Activated naive CD4-positive, alpha-beta T cell treated with anti-CD3 and anti-CD28 coated beads for 36 hours (primary cell): ENCODE measurements at regions of chr4 and their contacts with region 1.

Region 1: GRCh38 chr4:82428969-82429727 is 1.1 kb downstream of the HNRNPDL start:
- DNase-seq: peak; percentile 92
- H3K4me3 Mint-ChIP-seq: peak overlapping the region; percentile 93
- H3K27ac Mint-ChIP-seq: peak overlapping the region; percentile 99
- H3K4me1 Mint-ChIP-seq: peaks cover 64% of the 10 kb centered on the region
- H3K27me3 Mint-ChIP-seq: no peaks in the 10 kb centered on the region

Region 2: GRCh38 chr4:80540785-80541469 is 1888.2 kb before region 1 on chr4:
- CTCF ChIA-PET with region 1: no interaction called
- intact Hi-C with region 1: loop called (anchors 5 kb)
- DNase-seq: no peak
- H3K4me3 Mint-ChIP-seq: no peak overlapping the region
- H3K27ac Mint-ChIP-seq: peak overlapping the region; percentile 41
- H3K4me1 Mint-ChIP-seq: peaks cover 48% of the 10 kb centered on the region
- H3K27me3 Mint-ChIP-seq: peaks cover 34% of the 10 kb centered on the region

Region 3: DNA sequence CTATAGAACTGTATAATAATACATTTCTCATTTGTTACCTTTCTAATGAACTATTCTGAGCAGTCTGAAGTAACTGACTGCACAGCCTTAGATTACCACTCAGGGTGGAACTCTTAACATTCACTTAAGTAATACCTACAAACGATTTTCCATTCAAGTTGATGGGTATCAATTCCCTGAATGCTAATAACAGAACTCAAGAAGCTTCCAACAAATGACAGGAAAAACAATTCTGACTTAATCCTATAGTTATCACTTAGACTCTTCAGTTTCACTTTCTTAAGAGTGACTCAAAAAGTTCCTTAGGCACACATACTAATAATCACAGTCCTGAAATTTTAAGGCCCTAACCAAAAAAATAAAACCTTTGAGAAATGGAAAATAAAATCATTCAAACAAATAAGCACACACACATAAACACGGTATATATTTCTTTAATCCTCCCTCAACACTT is 76.2 kb before region 1 on chr4:
- CTCF ChIA-PET with region 1: no interaction called
- intact Hi-C with region 1: loop called (anchors 2 kb)
- DNase-seq: no peak
- H3K4me3 Mint-ChIP-seq: no peak overlapping the region
- H3K27ac Mint-ChIP-seq: peak overlapping the region; percentile 78
- H3K4me1 Mint-ChIP-seq: peaks cover 55% of the 10 kb centered on the region
- H3K27me3 Mint-ChIP-seq: no peaks in the 10 kb centered on the region

Region 4: GRCh38 chr4:82360298-82361177 is 68.6 kb before region 1 on chr4:
- CTCF ChIA-PET with region 1: interaction called, 11 read pairs
- intact Hi-C with region 1: no loop called
- DNase-seq: no peak
- H3K4me3 Mint-ChIP-seq: no peak overlapping the region
- H3K27ac Mint-ChIP-seq: peak overlapping the region; percentile 31
- H3K4me1 Mint-ChIP-seq: peaks cover 78% of the 10 kb centered on the region
- H3K27me3 Mint-ChIP-seq: no peaks in the 10 kb centered on the region

Region 5: DNA sequence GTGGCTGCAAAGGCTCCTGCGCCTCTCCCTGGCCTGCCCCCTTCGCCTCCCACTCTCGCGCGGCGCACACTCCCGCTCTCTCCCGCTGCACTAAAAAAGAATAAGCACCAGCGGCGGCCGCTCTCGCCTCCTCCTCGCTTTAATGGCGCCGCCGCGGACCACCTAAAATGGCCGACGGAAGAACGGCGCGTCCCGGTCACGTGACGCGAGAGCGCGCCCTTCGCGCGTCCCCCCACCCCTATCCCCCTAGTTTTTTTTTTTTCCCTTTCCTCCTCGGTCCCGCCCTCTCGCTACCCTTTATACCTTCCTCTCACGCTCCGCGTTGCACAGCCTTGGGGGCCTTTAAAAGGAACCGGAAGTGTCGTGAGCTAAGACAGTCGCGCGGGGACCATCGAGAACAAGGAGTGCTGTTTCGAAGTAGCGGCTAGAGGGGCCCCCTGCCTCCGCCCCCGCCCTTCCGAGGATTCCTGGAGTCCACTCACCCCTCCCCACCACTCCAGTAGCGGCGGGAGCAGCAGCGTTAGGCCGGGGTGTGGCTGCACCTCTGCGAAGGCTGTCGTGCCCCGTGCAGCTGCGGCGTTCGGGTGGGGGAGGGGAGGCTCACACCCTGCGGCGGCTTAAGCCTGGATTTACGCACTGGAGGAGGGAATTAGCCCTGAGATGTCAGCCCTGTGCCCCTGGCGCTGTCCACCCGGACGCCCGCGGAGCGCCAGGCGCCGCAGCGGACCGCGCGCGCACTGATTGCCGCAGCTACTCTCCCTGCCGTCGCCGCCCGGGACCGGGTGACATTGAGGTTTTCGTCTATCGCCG is 55.1 kb before region 1 on chr4 and contains the start of gene HNRNPD:
- CTCF ChIA-PET with region 1: interaction called, 9 read pairs
- intact Hi-C with region 1: loop called (anchors 1 kb)
- DNase-seq: peak; percentile 96
- H3K4me3 Mint-ChIP-seq: peak within 1 kb of the TSS; percentile 95
- H3K27ac Mint-ChIP-seq: peak within 1 kb of the TSS; percentile 95
- H3K4me1 Mint-ChIP-seq: peaks cover 33% of the 10 kb centered on the region
- H3K27me3 Mint-ChIP-seq: no peaks in the 10 kb centered on the region
- total RNA-seq, gene HNRNPD: 340 to 367 TPM

Region 6: DNA sequence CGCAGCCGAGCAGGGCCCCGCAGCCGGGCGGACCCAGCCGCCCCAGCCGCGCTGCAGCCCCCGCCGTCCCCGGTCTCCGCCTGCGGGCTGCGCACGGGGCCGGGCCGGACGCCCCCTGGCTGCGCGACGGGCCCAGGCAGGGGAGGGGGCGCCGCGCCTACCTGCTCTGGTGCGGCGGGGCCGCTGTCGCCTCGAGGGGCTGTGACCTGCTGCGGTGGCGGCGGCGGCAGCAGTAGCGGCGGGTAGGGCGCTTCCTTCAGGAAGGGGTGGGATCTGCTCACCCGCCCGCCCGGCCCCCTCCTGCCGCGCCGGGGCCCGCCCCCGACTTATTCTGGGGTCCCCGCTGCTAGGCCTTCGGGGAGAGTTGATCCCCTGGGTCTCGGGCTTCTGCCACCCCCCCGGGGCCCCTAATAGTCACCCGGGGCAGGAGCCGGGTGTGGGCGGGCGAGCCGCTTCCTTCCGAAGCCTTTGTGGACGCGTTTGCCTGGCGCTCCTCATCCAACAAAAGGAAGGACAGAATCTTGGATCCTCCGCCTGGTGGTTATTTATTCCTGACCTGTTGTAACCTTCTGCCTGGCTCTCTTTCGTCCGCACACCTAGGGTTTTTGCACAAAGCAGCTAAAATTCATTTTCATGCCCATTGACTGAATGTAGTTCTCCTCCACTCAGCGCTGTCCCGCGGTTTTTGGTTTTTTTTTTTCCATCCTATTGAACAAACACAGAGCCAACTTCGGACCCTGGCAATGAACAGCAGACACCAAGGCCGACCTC is 132.8 kb after region 1 on chr4 and contains the start of gene TMEM150C:
- CTCF ChIA-PET with region 1: no interaction called
- intact Hi-C with region 1: no loop called
- DNase-seq: peak; percentile 7
- H3K4me3 Mint-ChIP-seq: peak within 1 kb of the TSS; percentile 66
- H3K27ac Mint-ChIP-seq: no peak within 1 kb of the TSS
- H3K4me1 Mint-ChIP-seq: peaks cover 11% of the 10 kb centered on the region
- H3K27me3 Mint-ChIP-seq: peaks cover 53% of the 10 kb centered on the region
- total RNA-seq, gene TMEM150C: not detected

Region 7: DNA sequence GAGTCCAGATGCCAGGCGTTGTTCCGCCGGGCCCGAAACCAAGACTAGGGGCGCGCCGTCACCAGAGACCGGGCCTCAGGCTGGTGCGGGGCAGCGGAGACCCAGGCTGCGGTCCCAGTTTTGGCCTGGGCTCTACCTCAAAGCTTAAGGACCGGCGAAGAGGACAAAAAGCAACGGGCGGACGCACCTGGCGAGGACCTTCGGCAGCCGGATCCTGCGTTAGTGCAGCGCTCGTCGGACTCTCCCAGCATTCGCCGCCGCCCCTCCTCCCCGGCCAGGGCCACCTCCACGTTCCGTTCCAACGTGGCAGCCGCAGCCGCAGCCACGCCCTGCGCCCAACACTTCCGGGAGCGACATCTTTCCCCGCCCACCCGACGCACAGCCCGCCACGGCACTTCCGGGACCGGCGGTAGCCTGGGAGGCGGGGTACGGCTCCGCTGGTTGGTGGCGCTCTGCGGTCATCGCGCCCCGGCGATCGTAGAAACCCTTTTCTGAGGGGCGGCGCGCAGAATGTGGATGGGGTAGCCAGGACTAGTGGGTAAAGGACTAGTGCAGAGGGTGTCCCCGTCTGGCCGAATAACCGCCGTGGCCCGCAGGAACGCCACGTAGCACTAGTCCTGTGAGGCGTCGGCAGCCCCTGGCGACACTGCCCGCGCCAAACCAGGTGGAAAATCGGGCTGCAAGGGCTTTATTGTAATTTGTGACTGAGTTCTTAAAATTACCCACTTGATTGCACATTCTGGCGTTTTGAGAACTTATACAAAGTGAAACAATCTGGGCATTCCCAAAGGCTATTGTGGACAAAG is 462.0 kb after region 1 on chr4 and contains the start of gene SEC31A:
- CTCF ChIA-PET with region 1: no interaction called
- intact Hi-C with region 1: loop called (anchors 2 kb)
- DNase-seq: peak; percentile 98
- H3K4me3 Mint-ChIP-seq: peak within 1 kb of the TSS; percentile 81
- H3K27ac Mint-ChIP-seq: peak within 1 kb of the TSS; percentile 89
- H3K4me1 Mint-ChIP-seq: peaks cover 49% of the 10 kb centered on the region
- H3K27me3 Mint-ChIP-seq: no peaks in the 10 kb centered on the region
- total RNA-seq, gene SEC31A: 85.1 to 85.7 TPM